ENCODE measurements at regions of chr17 and their contacts with region 1.

Region 1: GRCh38 chr17:49861150-49861892 is 13.5 kb upstream of the TAC4 start:
- DNase-seq: no peak
- H3K4me3 ChIP-seq: no peak overlapping the region
- CTCF ChIP-seq: peak; percentile 81

Region 2: GRCh38 chr17:49987681-49988441 is 126.5 kb after region 1 on chr17:
- CTCF ChIA-PET with region 1: interaction called, 753 read pairs
- POLR2A ChIA-PET with region 1: no interaction called
- DNase-seq: no peak
- H3K4me3 ChIP-seq: no peak overlapping the region
- CTCF ChIP-seq: no peak

Region 3: GRCh38 chr17:50015146-50015545 is 153.8 kb after region 1 on chr17:
- CTCF ChIA-PET with region 1: no interaction called
- POLR2A ChIA-PET with region 1: no interaction called
- DNase-seq: no peak
- H3K4me3 ChIP-seq: no peak overlapping the region
- CTCF ChIP-seq: no peak

Measured in AG04449 (cell line).